ENCODE measurements at regions of chr15 and their contacts with region 1.

Region 1: GRCh38 chr15:69394556-69395282 is 19.4 kb upstream of the KIF23 start:
- DNase-seq: peak; percentile 90
- ATAC-seq: peak; percentile 98
- H3K4me3 Mint-ChIP-seq: no peak overlapping the region
- H3K27ac Mint-ChIP-seq: no peak overlapping the region
- H3K4me1 Mint-ChIP-seq: peaks cover 6% of the 10 kb centered on the region
- H3K27me3 Mint-ChIP-seq: peaks cover 3% of the 10 kb centered on the region
- CTCF ChIP-seq: peak; percentile 96

Region 2: DNA sequence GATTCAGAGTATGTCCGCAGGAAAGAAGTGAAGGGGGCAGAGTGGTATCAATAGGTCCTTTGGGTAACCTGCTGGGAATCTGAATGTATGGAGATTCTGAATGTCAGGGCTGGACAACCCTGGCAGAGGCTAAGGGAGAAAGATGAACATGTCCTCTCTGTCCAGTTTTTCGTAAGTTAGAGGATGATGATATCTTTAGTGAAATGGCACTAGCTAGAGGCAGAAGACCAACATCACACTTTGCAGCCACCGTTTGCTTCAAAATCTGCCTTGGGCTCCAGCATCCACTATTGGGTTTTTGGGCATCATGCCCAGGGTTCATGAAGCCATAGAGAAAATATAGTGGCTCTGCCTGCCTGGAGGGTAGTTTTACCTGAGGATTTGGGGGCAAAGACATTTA is 32.7 kb before region 1 on chr15:
- CTCF ChIA-PET with region 1: no interaction called
- POLR2A ChIA-PET with region 1: no interaction called
- intact Hi-C with region 1: no loop called
- DNase-seq: no peak
- ATAC-seq: no peak
- H3K4me3 Mint-ChIP-seq: no peak overlapping the region
- H3K27ac Mint-ChIP-seq: no peak overlapping the region
- H3K4me1 Mint-ChIP-seq: no peaks in the 10 kb centered on the region
- H3K27me3 Mint-ChIP-seq: no peaks in the 10 kb centered on the region
- CTCF ChIP-seq: no peak

Region 3: GRCh38 chr15:69405110-69405509 is 10.4 kb after region 1 on chr15:
- CTCF ChIA-PET with region 1: interaction called, 18 read pairs
- POLR2A ChIA-PET with region 1: no interaction called
- intact Hi-C with region 1: no loop called
- DNase-seq: no peak
- ATAC-seq: no peak
- H3K4me3 Mint-ChIP-seq: no peak overlapping the region
- H3K27ac Mint-ChIP-seq: no peak overlapping the region
- H3K4me1 Mint-ChIP-seq: peaks cover 12% of the 10 kb centered on the region
- H3K27me3 Mint-ChIP-seq: peaks cover 12% of the 10 kb centered on the region
- CTCF ChIP-seq: no peak

Region 4: GRCh38 chr15:69413822-69414700 is 19.3 kb after region 1 on chr15 and contains the start of gene KIF23:
- CTCF ChIA-PET with region 1: interaction called, 18 read pairs
- POLR2A ChIA-PET with region 1: no interaction called
- intact Hi-C with region 1: no loop called
- DNase-seq: peak; percentile 95
- ATAC-seq: peak; percentile 94
- H3K4me3 Mint-ChIP-seq: peak within 1 kb of the TSS; percentile 81
- H3K27ac Mint-ChIP-seq: peak within 1 kb of the TSS; percentile 70
- H3K4me1 Mint-ChIP-seq: peaks cover 14% of the 10 kb centered on the region
- H3K27me3 Mint-ChIP-seq: peaks cover 8% of the 10 kb centered on the region
- CTCF ChIP-seq: no peak
- total RNA-seq, gene KIF23: 45.4 to 47.0 TPM

Region 5: GRCh38 chr15:69648212-69648611 is 253.5 kb after region 1 on chr15:
- CTCF ChIA-PET with region 1: no interaction called
- POLR2A ChIA-PET with region 1: no interaction called
- intact Hi-C with region 1: no loop called
- DNase-seq: no peak
- ATAC-seq: no peak
- H3K4me3 Mint-ChIP-seq: no peak overlapping the region
- H3K27ac Mint-ChIP-seq: no peak overlapping the region
- H3K4me1 Mint-ChIP-seq: peaks cover 7% of the 10 kb centered on the region
- H3K27me3 Mint-ChIP-seq: peaks cover 9% of the 10 kb centered on the region
- CTCF ChIP-seq: no peak

Measured in activated CD8-positive, alpha-beta T cell treated with anti-CD3 and anti-CD28 coated beads for 36 hours (primary cell).